ENCODE measurements at regions of chr2 and their contacts with region 1.

Region 1: DNA sequence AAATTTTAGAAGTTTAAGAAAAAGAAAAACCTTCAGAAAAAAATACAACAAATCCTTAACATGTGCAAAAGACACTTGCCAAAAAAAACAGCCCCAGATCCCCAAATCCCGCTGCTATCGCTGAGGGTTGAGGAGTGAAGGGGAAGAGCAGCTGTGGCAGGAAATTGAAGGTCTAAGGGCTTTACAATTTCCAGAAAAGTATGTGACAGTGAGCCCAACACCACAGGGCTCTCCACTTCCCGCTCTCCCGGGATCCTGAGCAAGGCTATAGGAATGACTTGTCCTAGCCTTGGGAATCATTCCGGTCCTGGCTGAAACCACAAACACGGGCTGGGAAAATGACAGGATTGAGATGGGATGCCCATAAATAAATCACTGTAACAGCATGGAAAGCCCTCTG is 191.4 kb downstream of the TMEM163 start:
- DNase-seq: no peak
- ATAC-seq: no peak
- H3K4me3 ChIP-seq: no peak overlapping the region
- H3K27ac ChIP-seq: no peak overlapping the region
- H3K4me1 ChIP-seq: no peaks in the 10 kb centered on the region
- H3K27me3 ChIP-seq: peaks cover 21% of the 10 kb centered on the region; the same call in 1 of the 2 replicates
- CTCF ChIP-seq: no peak

Region 2: GRCh38 chr2:134558208-134558855 is 31.0 kb after region 1 on chr2:
- CTCF ChIA-PET with region 1: no interaction called
- POLR2A ChIA-PET with region 1: no interaction called
- intact Hi-C with region 1: no loop called
- DNase-seq: no peak
- ATAC-seq: no peak
- H3K4me3 ChIP-seq: no peak overlapping the region
- H3K27ac ChIP-seq: no peak overlapping the region
- H3K4me1 ChIP-seq: no peaks in the 10 kb centered on the region
- H3K27me3 ChIP-seq: no peaks in the 10 kb centered on the region
- CTCF ChIP-seq: no peak

Region 3: GRCh38 chr2:134609924-134610513 is 82.6 kb after region 1 on chr2:
- CTCF ChIA-PET with region 1: interaction called, 12 read pairs
- POLR2A ChIA-PET with region 1: no interaction called
- intact Hi-C with region 1: no loop called
- DNase-seq: no peak
- ATAC-seq: no peak
- H3K4me3 ChIP-seq: no peak overlapping the region
- H3K27ac ChIP-seq: no peak overlapping the region
- H3K4me1 ChIP-seq: no peaks in the 10 kb centered on the region
- H3K27me3 ChIP-seq: peaks cover 8% of the 10 kb centered on the region; the same call in 1 of the 2 replicates
- CTCF ChIP-seq: no peak

Measured in PC-3 (cell line).